Transverse colon (tissue), 4 donors: ENCODE measurements at regions of chr9 and their contacts with region 1.

Region 1: GRCh38 chr9:24961762-24962161 is 416.1 kb upstream of the IZUMO3 start:
- DNase-seq: no peak
- H3K4me3 ChIP-seq: no peak overlapping the region
- H3K27ac ChIP-seq: no peak overlapping the region
- H3K4me1 ChIP-seq: no peaks in the 10 kb centered on the region
- H3K27me3 ChIP-seq: no peaks in the 10 kb centered on the region
- CTCF ChIP-seq: no peak
- EP300 ChIP-seq: no peak
- POLR2A ChIP-seq: no peak

Region 2: GRCh38 chr9:23243523-23243922 is 1718.2 kb before region 1 on chr9:
- in situ Hi-C with region 1: no loop called
- intact Hi-C with region 1: loop called (anchors 5 kb)
- DNase-seq: no peak
- H3K4me3 ChIP-seq: no peak overlapping the region
- H3K27ac ChIP-seq: no peak overlapping the region
- H3K4me1 ChIP-seq: no peaks in the 10 kb centered on the region
- H3K27me3 ChIP-seq: no peaks in the 10 kb centered on the region
- CTCF ChIP-seq: no peak
- EP300 ChIP-seq: no peak
- POLR2A ChIP-seq: no peak

Region 3: GRCh38 chr9:26537211-26537610 is 1575.4 kb after region 1 on chr9:
- in situ Hi-C with region 1: no loop called
- intact Hi-C with region 1: loop called (anchors 5 kb)
- DNase-seq: no peak
- H3K4me3 ChIP-seq: no peak overlapping the region
- H3K27ac ChIP-seq: no peak overlapping the region
- H3K4me1 ChIP-seq: no peaks in the 10 kb centered on the region
- H3K27me3 ChIP-seq: no peaks in the 10 kb centered on the region
- CTCF ChIP-seq: no peak
- EP300 ChIP-seq: no peak
- POLR2A ChIP-seq: no peak